GM12878 (cell line): ENCODE measurements at regions of chr14 and their contacts with region 1.

Region 1: GRCh38 chr14:55599200-55599879 is 19.3 kb downstream of the KTN1 start:
- DNase-seq: no peak
- ATAC-seq: no peak
- H3K4me3 ChIP-seq: no peak overlapping the region
- H3K27ac ChIP-seq: no peak overlapping the region
- H3K4me1 ChIP-seq: no peaks in the 10 kb centered on the region
- H3K27me3 ChIP-seq: no peaks in the 10 kb centered on the region
- CTCF ChIP-seq: no peak
- EP300 ChIP-seq: no peak
- POLR2A ChIP-seq: no peak
- RAD21 ChIP-seq: no peak

Region 2: DNA sequence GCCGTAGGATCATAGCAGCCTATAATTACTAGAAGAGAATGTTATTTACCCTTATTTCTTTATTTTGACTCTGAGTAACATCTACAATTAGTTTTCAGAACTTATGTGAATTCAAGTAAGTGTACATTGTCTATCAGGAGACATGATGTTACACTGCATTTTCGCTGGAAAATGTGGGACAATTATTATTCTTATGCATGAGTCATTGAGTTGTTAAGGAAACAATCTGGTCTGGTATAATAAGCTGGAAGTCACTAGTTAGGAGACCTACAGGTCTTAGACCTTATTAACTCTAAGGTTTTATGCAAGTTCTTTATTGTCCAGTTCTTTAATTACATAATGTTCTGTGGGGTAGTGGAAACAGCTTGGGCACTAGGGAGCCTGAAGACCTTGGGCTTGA is 13.5 kb before region 1 on chr14:
- CTCF ChIA-PET with region 1: interaction called, 4 read pairs
- POLR2A ChIA-PET with region 1: interaction called, 4 read pairs
- RAD21 ChIA-PET with region 1: interaction called, 3 read pairs
- SMC1A ChIA-PET with region 1: interaction called, 22 read pairs
- in situ Hi-C with region 1: no loop called
- intact Hi-C with region 1: no loop called
- DNase-seq: no peak
- ATAC-seq: no peak
- H3K4me3 ChIP-seq: no peak overlapping the region
- H3K27ac ChIP-seq: no peak overlapping the region
- H3K4me1 ChIP-seq: peaks cover 8% of the 10 kb centered on the region; the same call in 1 of the 2 replicates
- H3K27me3 ChIP-seq: no peaks in the 10 kb centered on the region
- CTCF ChIP-seq: no peak
- EP300 ChIP-seq: no peak
- POLR2A ChIP-seq: no peak
- RAD21 ChIP-seq: no peak